CD8-positive, alpha-beta T cell (primary cell): ENCODE measurements at regions of chr15 and their contacts with region 1.

Region 1: DNA sequence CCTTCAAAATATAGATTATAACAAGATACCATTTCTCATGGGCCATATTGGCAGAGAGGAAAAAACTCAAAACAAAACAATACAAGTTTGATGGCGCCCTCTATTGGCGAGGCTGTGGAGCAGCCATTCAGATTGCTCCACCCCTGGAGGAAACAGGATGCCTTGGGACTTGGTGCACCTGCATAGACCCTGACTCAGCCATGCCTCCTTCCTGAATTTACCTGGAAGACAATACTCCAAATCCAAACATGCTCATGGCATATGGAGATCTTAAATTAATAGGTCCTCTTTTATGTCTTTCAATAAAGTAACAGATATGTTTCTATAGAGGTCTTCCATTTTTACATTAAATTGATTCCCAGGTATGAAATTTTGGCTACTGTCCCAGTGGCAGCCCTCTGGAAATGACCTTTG is 90.0 kb downstream of the APBA2 start:
- DNase-seq: peak; percentile 50 to 84 (median 76)
- ATAC-seq: peak; percentile 61
- H3K4me3 ChIP-seq: no peak overlapping the region
- H3K4me3 Mint-ChIP-seq: no peak overlapping the region
- H3K27ac ChIP-seq: no peak overlapping the region
- H3K27ac Mint-ChIP-seq: peak overlapping the region; percentile 80
- H3K4me1 ChIP-seq: peaks cover 54% of the 10 kb centered on the region
- H3K4me1 Mint-ChIP-seq: peaks cover 62% of the 10 kb centered on the region
- H3K27me3 ChIP-seq: no peaks in the 10 kb centered on the region
- H3K27me3 Mint-ChIP-seq: no peaks in the 10 kb centered on the region
- CTCF ChIP-seq: peak; percentile 97

Region 2: DNA sequence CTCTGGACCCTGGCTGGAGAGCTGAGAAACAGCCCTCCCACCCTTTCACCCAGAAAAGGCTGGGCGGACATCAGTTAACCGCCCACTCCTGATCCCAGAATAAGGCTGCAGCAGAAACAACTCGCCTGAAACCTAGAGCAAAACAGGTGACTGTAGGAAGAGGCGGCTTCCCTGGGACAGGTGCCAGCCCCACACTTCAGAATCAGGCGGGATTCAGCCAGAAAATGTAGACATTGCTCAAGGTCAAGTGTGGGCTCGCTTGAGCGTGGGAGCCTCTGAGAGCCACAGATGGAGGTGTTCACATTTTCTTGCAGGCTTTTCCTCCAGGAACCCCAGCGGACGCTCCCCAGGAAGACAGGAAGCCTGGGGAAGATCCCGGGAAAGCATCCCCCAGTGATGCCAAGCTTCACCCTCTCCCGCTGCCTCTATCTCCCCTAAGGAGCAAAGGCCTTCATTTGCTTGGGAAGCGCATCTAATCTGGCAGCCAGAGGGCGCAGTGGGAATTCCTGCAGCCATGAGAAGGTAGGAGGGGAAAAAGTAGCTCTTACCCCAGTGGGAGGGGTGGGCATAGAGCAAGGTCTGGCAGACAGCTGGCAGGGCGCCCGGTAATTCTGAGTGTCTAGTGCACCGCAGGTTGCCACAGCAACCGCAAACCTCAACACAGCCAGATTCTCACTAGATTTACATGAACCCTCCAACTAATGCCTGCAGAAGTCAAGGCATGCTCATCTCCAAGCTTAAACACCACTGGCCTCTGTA is 954.3 kb before region 1 on chr15:
- CTCF ChIA-PET with region 1: no interaction called
- POLR2A ChIA-PET with region 1: no interaction called
- intact Hi-C with region 1: no loop called
- DNase-seq: peak in 2 of 9 experiments; percentile 17 to 23
- ATAC-seq: no peak
- H3K4me3 ChIP-seq: no peak overlapping the region
- H3K4me3 Mint-ChIP-seq: no peak overlapping the region
- H3K27ac ChIP-seq: no peak overlapping the region
- H3K27ac Mint-ChIP-seq: no peak overlapping the region
- H3K4me1 ChIP-seq: no peaks in the 10 kb centered on the region
- H3K4me1 Mint-ChIP-seq: no peaks in the 10 kb centered on the region
- H3K27me3 ChIP-seq: no peaks in the 10 kb centered on the region
- H3K27me3 Mint-ChIP-seq: peaks cover 3% of the 10 kb centered on the region
- CTCF ChIP-seq: no peak

Region 3: GRCh38 chr15:28873541-28874190 is 102.1 kb before region 1 on chr15:
- CTCF ChIA-PET with region 1: interaction called, 41 read pairs
- POLR2A ChIA-PET with region 1: interaction called, 3 read pairs
- intact Hi-C with region 1: loop called (anchors 1 kb)
- DNase-seq: peak in 6 of 9 experiments; percentile 37 to 74 (median 66)
- ATAC-seq: peak; percentile 88
- H3K4me3 ChIP-seq: no peak overlapping the region
- H3K4me3 Mint-ChIP-seq: no peak overlapping the region
- H3K27ac ChIP-seq: no peak overlapping the region
- H3K27ac Mint-ChIP-seq: no peak overlapping the region
- H3K4me1 ChIP-seq: peaks cover 21% of the 10 kb centered on the region
- H3K4me1 Mint-ChIP-seq: peaks cover 21% of the 10 kb centered on the region
- H3K27me3 ChIP-seq: no peaks in the 10 kb centered on the region
- H3K27me3 Mint-ChIP-seq: no peaks in the 10 kb centered on the region
- CTCF ChIP-seq: peak; percentile 60

Region 4: DNA sequence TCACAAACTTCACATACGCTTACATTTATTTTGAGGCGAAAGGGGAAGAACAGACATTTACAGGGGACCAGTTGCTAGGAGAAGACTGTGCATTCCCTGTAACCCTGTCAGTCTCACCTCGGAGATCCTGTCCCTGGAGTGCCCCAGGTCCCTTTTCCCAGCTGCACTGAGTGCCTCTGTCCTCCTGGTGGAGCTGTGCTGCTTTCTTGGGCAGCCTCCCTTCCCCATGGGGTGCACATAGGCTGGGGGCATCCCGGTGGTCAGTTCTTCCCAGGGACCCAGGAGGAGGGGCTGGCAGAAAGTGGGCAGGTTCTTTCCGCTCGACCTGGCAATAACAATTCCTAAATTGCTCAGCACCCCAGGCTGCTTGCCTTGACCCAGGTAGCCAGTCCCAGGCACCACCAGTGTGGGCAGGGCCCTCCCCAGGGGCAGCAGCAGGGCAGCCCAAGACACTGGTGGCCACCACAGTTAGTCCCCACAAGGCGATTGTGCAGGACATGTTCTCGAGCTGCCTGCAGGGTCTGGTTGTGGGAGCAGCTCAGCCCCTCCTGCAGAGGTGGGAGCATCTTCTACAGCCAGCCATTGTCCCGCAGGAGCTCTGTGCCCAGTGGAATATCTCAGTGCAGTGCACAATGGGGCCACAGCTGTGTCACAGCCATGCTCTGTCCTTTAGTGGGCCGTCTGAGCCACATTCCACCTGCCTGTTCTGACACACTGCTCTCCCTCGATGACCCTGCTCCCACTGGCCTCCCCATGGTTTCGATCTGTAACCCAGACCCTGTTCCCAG is 53.7 kb before region 1 on chr15:
- CTCF ChIA-PET with region 1: interaction called, 22 read pairs
- POLR2A ChIA-PET with region 1: no interaction called
- intact Hi-C with region 1: loop called in 1 of 2 experiments (anchors 2 kb)
- DNase-seq: peak in 1 of 9 experiments; percentile 30
- ATAC-seq: no peak
- H3K4me3 ChIP-seq: peak overlapping the region in 1 of 2 experiments; percentile 4
- H3K4me3 Mint-ChIP-seq: peak overlapping the region; percentile 79
- H3K27ac ChIP-seq: peak overlapping the region in 1 of 2 experiments; percentile 60
- H3K27ac Mint-ChIP-seq: peak overlapping the region; percentile 86
- H3K4me1 ChIP-seq: peaks cover 72% of the 10 kb centered on the region
- H3K4me1 Mint-ChIP-seq: peaks cover 81% of the 10 kb centered on the region
- H3K27me3 ChIP-seq: no peaks in the 10 kb centered on the region
- H3K27me3 Mint-ChIP-seq: no peaks in the 10 kb centered on the region
- CTCF ChIP-seq: no peak

Region 5: GRCh38 chr15:28942046-28942445 is 33.7 kb before region 1 on chr15:
- CTCF ChIA-PET with region 1: interaction called, 12 read pairs
- POLR2A ChIA-PET with region 1: interaction called, 3 read pairs
- intact Hi-C with region 1: no loop called
- DNase-seq: peak in 8 of 9 experiments; percentile 34 to 84 (median 66)
- ATAC-seq: peak; percentile 74
- H3K4me3 ChIP-seq: peak overlapping the region; percentile 10 to 28
- H3K4me3 Mint-ChIP-seq: peak overlapping the region; percentile 59
- H3K27ac ChIP-seq: peak overlapping the region; percentile 4 to 54
- H3K27ac Mint-ChIP-seq: peak overlapping the region; percentile 92
- H3K4me1 ChIP-seq: peaks cover 91% of the 10 kb centered on the region
- H3K4me1 Mint-ChIP-seq: peaks cover 87% of the 10 kb centered on the region
- H3K27me3 ChIP-seq: no peaks in the 10 kb centered on the region
- H3K27me3 Mint-ChIP-seq: no peaks in the 10 kb centered on the region
- CTCF ChIP-seq: no peak

Region 6: DNA sequence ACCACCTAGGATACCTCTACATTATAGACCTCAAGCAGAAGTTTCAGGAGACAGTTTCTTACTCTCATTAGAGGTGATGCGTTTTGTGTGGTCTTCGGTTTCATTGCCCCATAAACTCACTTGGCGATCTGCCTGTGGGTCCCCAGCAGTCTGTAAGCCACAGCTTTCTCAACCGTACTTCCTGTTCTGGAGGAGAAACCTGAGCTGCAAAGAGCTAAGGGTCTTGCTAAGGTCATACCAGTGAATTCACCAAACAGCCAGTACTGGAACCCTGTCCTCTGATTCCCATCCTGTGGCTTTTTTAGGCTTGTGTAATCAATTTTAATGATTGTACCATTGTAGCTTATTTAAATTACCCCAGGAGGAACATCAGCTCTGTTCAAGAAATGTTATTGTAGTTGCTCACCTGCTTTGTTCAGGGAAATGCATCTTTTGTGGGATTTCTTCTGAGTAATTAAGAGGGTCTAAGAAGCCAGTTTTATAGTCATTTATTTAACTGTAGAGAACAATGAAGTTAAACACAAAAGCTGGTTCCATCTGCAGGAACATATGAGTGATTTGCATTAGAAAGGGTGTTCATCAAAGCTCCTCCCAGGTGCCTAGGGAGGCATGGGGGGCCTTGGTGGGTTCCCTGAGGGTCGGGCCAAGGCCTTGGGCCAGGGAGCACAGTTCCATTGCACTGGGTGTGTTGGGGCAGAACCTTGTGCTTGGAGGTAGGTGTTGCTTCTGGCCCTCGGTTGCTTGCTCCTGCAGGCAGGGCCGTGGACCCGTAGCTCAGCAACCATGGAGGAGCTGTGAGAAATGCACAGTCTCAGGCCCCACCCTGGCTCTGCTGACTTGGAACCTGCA is 20.4 kb before region 1 on chr15:
- CTCF ChIA-PET with region 1: interaction called, 15 read pairs
- POLR2A ChIA-PET with region 1: interaction called, 5 read pairs
- intact Hi-C with region 1: loop called in 1 of 2 experiments (anchors 2 kb)
- DNase-seq: peak in 4 of 9 experiments; percentile 39 to 70 (median 58)
- ATAC-seq: peak; percentile 57
- H3K4me3 ChIP-seq: peak overlapping the region in 1 of 2 experiments; percentile 3
- H3K4me3 Mint-ChIP-seq: peak overlapping the region; percentile 72
- H3K27ac ChIP-seq: peak overlapping the region; percentile 31 to 58
- H3K27ac Mint-ChIP-seq: peak overlapping the region; percentile 96
- H3K4me1 ChIP-seq: peaks cover 76% of the 10 kb centered on the region
- H3K4me1 Mint-ChIP-seq: peaks cover 71% of the 10 kb centered on the region
- H3K27me3 ChIP-seq: no peaks in the 10 kb centered on the region
- H3K27me3 Mint-ChIP-seq: no peaks in the 10 kb centered on the region
- CTCF ChIP-seq: no peak